ENCODE measurements at regions of chr17 and their contacts with region 1.

Region 1: DNA sequence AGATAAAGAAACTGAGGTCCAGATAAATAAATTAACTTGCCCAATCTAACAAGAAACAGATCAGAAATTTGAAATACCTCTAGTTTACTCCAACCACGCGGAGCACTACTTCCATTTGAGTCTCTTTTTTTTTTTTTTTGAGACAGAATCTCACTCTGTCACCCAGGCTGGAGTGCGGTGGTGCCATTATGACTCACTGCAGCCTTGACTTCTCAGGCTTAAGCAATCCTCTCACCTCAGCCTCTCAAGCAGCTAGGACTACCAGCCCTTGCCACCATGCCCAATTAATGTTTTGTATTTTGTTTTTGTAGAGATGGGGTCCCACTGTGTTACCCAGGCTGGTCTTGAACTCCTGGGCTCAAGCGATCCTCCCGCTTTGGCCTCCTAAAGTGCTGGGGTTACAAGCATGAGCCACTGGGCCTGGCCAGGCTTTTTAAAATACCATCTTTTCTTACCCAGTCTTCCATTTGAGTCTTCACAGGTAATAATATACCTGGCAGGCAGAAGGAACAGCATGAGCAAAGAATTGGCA is 3.3 kb upstream of the NACA2 start:
- DNase-seq: no peak
- H3K4me3 ChIP-seq: no peak overlapping the region
- H3K4me3 Mint-ChIP-seq: no peak overlapping the region
- H3K27ac Mint-ChIP-seq: no peak overlapping the region
- H3K4me1 ChIP-seq: no peaks in the 10 kb centered on the region
- H3K4me1 Mint-ChIP-seq: no peaks in the 10 kb centered on the region
- H3K27me3 ChIP-seq: peaks cover 2% of the 10 kb centered on the region
- H3K27me3 Mint-ChIP-seq: peaks cover 3% of the 10 kb centered on the region
- CTCF ChIP-seq: no peak

Region 2: DNA sequence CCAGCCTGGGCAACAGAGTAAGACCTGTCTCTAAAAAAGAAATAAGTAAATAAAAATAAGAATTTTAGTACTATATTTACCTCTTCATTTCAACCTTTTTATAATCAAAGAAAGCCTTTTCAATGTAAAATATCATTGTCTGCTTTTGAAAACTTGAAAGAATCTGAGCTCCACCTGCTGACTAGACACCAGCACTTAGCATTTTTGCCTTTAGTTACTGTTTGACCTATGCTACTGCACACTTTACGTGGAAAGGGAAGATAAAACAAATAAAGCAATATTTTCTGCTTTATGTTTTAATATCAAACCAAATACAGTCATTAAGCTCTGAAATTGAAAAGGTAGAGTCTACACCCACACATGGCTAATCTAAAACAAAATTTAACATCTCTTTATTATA is 92.8 kb after region 1 on chr17:
- CTCF ChIA-PET with region 1: no interaction called
- POLR2A ChIA-PET with region 1: interaction called, 13 read pairs
- intact Hi-C with region 1: no loop called
- DNase-seq: no peak
- H3K4me3 ChIP-seq: no peak overlapping the region
- H3K4me3 Mint-ChIP-seq: no peak overlapping the region
- H3K27ac Mint-ChIP-seq: no peak overlapping the region
- H3K4me1 ChIP-seq: no peaks in the 10 kb centered on the region
- H3K4me1 Mint-ChIP-seq: no peaks in the 10 kb centered on the region
- H3K27me3 ChIP-seq: no peaks in the 10 kb centered on the region
- H3K27me3 Mint-ChIP-seq: no peaks in the 10 kb centered on the region
- CTCF ChIP-seq: no peak

Measured in Caco-2 (cell line).